PC-9 (cell line): ENCODE measurements at regions of chr19 and their contacts with region 1.

Region 1: GRCh38 chr19:6522712-6523111 is 8.1 kb upstream of the TNFSF9 start:
- DNase-seq: no peak
- H3K4me3 ChIP-seq: no peak overlapping the region
- H3K27ac ChIP-seq: no peak overlapping the region
- H3K4me1 ChIP-seq: no peaks in the 10 kb centered on the region
- H3K27me3 ChIP-seq: no peaks in the 10 kb centered on the region
- CTCF ChIP-seq: no peak

Region 2: GRCh38 chr19:6568010-6568526 is 45.4 kb after region 1 on chr19:
- CTCF ChIA-PET with region 1: no interaction called
- POLR2A ChIA-PET with region 1: interaction called, 14 read pairs
- intact Hi-C with region 1: no loop called
- DNase-seq: peak in 1 of 2 experiments; percentile 58
- H3K4me3 ChIP-seq: no peak overlapping the region
- H3K27ac ChIP-seq: no peak overlapping the region
- H3K4me1 ChIP-seq: no peaks in the 10 kb centered on the region
- H3K27me3 ChIP-seq: 0 out of 2 replicates have a peak, but pooled peaks cover 11% of the 10 kb centered on the region
- CTCF ChIP-seq: no peak